ENCODE measurements at regions of chr15 and their contacts with region 1.

Region 1: GRCh38 chr15:72117486-72118399 is at the start of gene MYO9A:
- DNase-seq: peak; percentile 99
- H3K4me3 Mint-ChIP-seq: peak within 1 kb of the TSS; percentile 95
- H3K27ac Mint-ChIP-seq: peak within 1 kb of the TSS; percentile 97
- H3K4me1 Mint-ChIP-seq: peaks cover 31% of the 10 kb centered on the region
- H3K27me3 Mint-ChIP-seq: no peaks in the 10 kb centered on the region
- total RNA-seq, gene MYO9A: 9.5 to 10.0 TPM

Region 2: DNA sequence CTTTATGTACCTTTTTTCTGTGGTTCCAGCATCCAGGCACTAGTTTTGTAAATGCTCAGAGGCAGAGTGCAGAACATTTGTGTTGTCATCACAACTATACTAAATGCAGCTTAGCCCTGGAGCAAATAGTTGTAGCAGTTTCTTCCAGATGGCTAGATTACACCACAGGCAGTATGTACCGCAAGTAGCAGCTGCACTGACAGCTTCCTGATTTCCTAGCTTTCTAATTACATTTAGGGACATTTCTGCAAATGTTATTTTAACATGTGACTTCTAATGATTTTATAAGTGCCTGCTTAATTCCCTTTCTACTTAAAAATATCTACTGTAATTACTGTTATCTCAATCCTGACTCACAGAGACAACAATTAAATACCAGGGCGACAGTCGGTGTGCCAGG is 200.9 kb before region 1 on chr15:
- CTCF ChIA-PET with region 1: no interaction called
- intact Hi-C with region 1: no loop called
- DNase-seq: no peak
- H3K4me3 Mint-ChIP-seq: no peak overlapping the region
- H3K27ac Mint-ChIP-seq: no peak overlapping the region
- H3K4me1 Mint-ChIP-seq: no peaks in the 10 kb centered on the region
- H3K27me3 Mint-ChIP-seq: no peaks in the 10 kb centered on the region

Region 3: GRCh38 chr15:72265031-72265430 is 147.3 kb after region 1 on chr15:
- CTCF ChIA-PET with region 1: interaction called, 3 read pairs
- intact Hi-C with region 1: loop called (anchors 2 kb)
- DNase-seq: no peak
- H3K4me3 Mint-ChIP-seq: no peak overlapping the region
- H3K27ac Mint-ChIP-seq: no peak overlapping the region
- H3K4me1 Mint-ChIP-seq: peaks cover 45% of the 10 kb centered on the region
- H3K27me3 Mint-ChIP-seq: no peaks in the 10 kb centered on the region

Region 4: GRCh38 chr15:72272213-72273002 is 154.7 kb after region 1 on chr15 and contains the start of gene PARP6:
- CTCF ChIA-PET with region 1: interaction called, 3 read pairs
- intact Hi-C with region 1: loop called (anchors 1 kb)
- DNase-seq: peak; percentile 98
- H3K4me3 Mint-ChIP-seq: peak within 1 kb of the TSS; percentile 87
- H3K27ac Mint-ChIP-seq: peak within 1 kb of the TSS; percentile 91
- H3K4me1 Mint-ChIP-seq: peaks cover 36% of the 10 kb centered on the region
- H3K27me3 Mint-ChIP-seq: no peaks in the 10 kb centered on the region
- total RNA-seq, gene PARP6: 38.8 to 44.7 TPM

Region 5: DNA sequence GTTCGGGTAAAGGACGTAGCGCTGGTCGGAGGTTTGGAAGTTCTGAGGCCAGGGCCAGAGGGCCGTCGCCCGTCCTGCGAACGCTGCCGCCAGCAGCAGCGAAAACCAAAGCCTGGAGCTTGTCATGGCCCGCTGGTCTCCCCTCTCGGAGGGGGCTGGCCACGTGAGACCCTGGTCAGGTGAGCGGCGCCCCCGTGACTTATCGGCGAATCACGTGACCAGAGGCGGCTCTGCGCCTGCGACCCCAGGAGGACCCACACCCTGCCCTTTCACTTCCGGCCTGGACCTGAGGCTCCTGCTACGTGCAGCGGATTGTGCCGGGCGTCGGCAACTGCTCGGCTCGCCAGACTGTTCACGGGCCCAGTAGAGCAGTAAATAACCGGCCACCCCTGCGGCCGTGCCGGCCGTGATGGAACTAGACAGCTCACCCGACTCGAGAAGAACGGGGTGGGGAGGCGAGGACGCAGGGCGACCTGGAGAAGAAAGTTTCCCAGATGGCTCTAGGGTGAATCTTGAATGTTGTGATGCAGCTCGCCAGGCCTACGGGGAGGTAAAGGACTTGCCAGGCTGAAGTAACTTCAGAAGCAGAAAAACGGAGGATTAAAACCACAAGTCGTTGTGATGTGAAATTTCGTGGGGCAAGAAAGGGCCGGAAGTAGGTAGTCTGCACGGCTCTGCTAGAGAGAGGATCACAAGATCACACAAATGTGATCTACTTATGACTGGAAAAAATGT is 258.3 kb after region 1 on chr15 and contains the start of gene HEXA:
- CTCF ChIA-PET with region 1: no interaction called
- intact Hi-C with region 1: loop called (anchors 2 kb)
- DNase-seq: peak; percentile 98
- H3K4me3 Mint-ChIP-seq: peak within 1 kb of the TSS; percentile 92
- H3K27ac Mint-ChIP-seq: peak within 1 kb of the TSS; percentile 94
- H3K4me1 Mint-ChIP-seq: peaks cover 42% of the 10 kb centered on the region
- H3K27me3 Mint-ChIP-seq: no peaks in the 10 kb centered on the region
- total RNA-seq, gene HEXA: 47.7 to 49.3 TPM

Measured in activated naive CD4-positive, alpha-beta T cell treated with anti-CD3 and anti-CD28 coated beads for 36 hours (primary cell).